ENCODE measurements at regions of chr12 and their contacts with region 1.

Region 1: DNA sequence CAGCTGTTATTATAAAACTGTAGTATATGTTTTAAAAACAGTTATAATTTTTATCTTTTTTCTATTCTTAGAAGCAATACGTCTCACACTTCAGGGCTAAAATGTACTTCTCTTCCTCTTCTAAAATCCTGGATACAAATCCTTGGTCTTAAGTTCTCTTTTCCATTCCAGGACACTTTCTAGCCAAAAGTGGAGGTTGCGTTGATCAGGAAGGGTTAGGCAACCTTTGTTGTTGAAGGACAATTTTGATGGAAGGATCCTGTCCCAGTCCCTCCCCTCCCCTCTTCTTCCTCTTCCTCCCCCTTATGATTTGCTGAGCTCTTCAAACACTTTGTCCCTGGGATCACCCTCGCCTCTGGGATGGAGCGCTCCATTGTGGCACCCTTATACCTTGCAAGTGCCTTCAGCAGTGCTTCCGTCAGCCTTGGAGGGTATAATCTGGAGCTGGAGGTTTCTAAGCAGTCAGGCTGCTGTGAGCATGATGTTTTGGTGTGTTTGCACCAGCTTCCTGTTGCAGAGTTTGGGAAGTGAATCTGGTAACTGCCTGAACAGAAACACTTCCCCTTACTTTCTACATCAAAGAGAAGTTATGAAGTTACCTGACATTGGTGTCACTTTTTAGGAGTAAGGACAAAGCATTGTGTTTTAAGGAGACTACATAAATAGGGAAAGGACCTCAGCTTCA is 87.4 kb upstream of the SLC38A2 start:
- DNase-seq: no peak

Region 2: DNA sequence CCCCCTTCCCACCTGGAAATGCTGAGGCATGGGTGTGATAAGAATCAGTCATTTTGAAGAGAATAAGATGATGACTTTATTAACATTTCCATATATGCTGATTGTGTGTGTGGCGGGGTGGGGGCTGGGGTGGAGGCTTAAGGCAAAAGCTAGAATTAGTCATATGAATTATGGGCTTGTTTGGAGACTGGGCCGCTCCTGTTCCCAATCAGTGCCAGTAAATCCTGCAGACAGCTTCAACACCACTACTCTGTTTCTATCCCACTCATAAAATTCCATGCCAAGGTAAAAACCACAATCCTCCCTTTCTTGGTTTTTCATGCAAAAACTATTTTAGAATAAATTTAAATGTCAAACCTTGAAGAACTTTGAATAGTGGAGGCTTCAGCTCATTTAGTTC is 57.6 kb before region 1 on chr12:
- intact Hi-C with region 1: no loop called
- DNase-seq: peak; percentile 80

Region 3: DNA sequence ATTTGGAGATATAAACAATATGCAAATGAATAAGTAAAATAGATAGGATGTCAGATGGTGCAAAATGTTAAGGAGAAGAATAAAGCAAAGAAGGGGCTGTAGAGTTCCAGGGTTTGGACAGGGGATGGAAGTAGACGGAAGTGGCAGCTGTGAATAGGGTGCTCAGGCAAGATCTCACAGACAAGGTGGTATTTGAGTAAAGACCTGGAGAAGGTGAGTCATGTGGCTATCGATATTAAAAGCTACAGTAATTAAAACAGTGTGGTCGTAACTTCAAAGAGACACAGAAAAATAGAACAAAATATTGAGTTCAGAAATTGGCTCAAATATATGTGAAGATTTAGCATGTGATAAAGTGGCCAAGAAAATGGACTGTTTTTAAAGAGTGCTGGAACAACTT is 26.2 kb before region 1 on chr12:
- intact Hi-C with region 1: loop called in 1 of 2 experiments (anchors 1 kb)
- DNase-seq: no peak

Measured in posterior vena cava (tissue), 2 donors.